ENCODE measurements at regions of chr3 and their contacts with region 1.

Region 1: GRCh38 chr3:192816351-192816750 is 89.0 kb upstream of the FGF12 start:
- DNase-seq: no peak
- H3K4me3 ChIP-seq: no peak overlapping the region
- H3K27ac ChIP-seq: no peak overlapping the region
- H3K4me1 ChIP-seq: no peaks in the 10 kb centered on the region
- H3K27me3 ChIP-seq: no peaks in the 10 kb centered on the region
- CTCF ChIP-seq: peak; percentile 73 to 80 (median 77)
- POLR2A ChIP-seq: no peak

Region 2: GRCh38 chr3:193039058-193039457 is 222.7 kb after region 1 on chr3:
- intact Hi-C with region 1: loop called (anchors 5 kb)
- DNase-seq: no peak
- H3K4me3 ChIP-seq: no peak overlapping the region
- H3K27ac ChIP-seq: no peak overlapping the region
- H3K4me1 ChIP-seq: no peaks in the 10 kb centered on the region
- H3K27me3 ChIP-seq: no peaks in the 10 kb centered on the region
- CTCF ChIP-seq: no peak
- POLR2A ChIP-seq: no peak

Measured in breast epithelium (tissue), 4 donors.